ENCODE measurements at regions of chr2 and their contacts with region 1.

Region 1: GRCh38 chr2:213336253-213336770 is 52.0 kb downstream of the SPAG16 start:
- DNase-seq: no peak
- ATAC-seq: no peak
- H3K4me3 ChIP-seq: no peak overlapping the region
- H3K27ac ChIP-seq: no peak overlapping the region
- H3K4me1 ChIP-seq: peaks cover 12% of the 10 kb centered on the region; the same call in 1 of the 2 replicates
- H3K27me3 ChIP-seq: no peaks in the 10 kb centered on the region
- CTCF ChIP-seq: no peak

Region 2: DNA sequence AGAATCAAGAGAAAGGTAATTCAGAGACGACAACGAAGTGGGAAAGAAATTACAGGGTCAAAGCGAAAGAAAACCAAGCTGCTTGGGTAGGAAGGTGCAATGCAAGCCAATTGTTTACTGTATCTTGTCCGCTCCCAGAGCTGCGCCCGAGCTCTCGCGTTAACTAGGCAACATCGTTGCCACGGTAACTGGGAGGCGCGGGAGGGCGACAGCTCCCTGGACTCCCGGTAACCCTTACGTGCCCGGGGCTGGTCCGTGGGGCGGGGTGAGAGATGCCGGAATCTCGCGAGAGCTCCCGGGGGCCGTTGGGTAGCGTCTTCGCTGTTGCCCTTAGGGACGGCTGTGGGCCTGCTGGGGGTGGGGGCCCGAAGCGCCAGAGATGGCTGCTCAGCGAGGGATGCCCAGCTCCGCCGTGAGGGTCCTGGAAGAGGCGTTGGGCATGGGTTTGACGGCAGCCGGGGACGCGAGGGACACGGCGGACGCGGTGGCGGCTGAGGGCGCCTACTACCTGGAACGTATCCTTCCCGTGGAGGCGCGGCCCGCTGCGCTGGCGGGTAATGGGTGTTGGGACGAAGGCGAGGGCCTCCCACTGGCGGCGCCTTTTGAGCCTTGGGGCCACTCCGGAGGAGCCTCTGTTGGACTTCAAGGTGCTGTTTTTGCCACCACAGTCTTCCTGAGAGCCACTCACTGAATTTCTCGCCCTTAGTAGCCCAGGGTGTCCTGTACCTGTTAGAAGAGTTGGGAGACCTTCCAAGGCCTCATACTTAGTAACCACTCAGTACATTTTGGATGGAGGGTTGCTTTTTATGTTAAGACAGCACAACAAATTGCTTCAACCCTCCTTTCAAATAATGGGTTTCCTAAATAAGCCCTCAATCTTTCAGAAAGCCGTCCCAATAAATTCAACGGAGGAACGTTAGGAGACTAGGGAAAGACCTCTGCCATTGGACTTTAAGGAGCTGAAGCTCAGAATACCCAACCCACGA is 51.9 kb before region 1 on chr2 and contains the start of gene SPAG16:
- CTCF ChIA-PET with region 1: no interaction called
- POLR2A ChIA-PET with region 1: no interaction called
- intact Hi-C with region 1: loop called (anchors 1 kb)
- DNase-seq: peak; percentile 98
- ATAC-seq: peak; percentile 88
- H3K4me3 ChIP-seq: peak within 1 kb of the TSS; percentile 83
- H3K27ac ChIP-seq: peak within 1 kb of the TSS; percentile 17; the same call in 1 of the 2 replicates
- H3K4me1 ChIP-seq: peaks cover 35% of the 10 kb centered on the region
- H3K27me3 ChIP-seq: no peaks in the 10 kb centered on the region
- CTCF ChIP-seq: 0 out of 2 replicates have a peak, but pooled peaks have one; percentile 9
- total RNA-seq, gene SPAG16: 14.9 and 17.2 TPM in 2 replicates